AG04449 (cell line): ENCODE measurements at regions of chr10 and their contacts with region 1.

Region 1: GRCh38 chr10:52308251-52309031 is 5.6 kb upstream of the DKK1 start:
- DNase-seq: no peak
- H3K4me3 ChIP-seq: peak overlapping the region; percentile 49
- CTCF ChIP-seq: peak; percentile 60

Region 2: DNA sequence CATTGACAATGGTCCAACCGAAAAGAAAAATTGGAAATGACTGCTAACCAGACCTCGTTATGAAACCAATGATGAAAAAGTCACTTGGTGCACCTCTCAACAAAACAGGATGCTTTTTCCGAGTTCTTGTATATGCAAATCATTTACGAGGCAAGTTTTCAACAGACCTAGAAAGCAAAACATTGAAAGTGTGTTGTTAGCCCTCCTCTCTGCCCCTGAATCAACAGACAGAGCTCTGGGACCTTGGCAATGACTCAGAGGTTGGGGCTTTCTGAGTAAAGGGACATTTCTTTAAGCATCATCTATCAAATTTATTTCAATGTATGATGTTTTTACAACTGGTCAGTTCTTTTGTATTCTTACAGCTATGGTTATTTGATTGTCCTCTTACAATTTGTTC is 10.7 kb before region 1 on chr10:
- CTCF ChIA-PET with region 1: interaction called, 13 read pairs
- POLR2A ChIA-PET with region 1: no interaction called
- DNase-seq: no peak
- H3K4me3 ChIP-seq: no peak overlapping the region
- CTCF ChIP-seq: no peak

Region 3: DNA sequence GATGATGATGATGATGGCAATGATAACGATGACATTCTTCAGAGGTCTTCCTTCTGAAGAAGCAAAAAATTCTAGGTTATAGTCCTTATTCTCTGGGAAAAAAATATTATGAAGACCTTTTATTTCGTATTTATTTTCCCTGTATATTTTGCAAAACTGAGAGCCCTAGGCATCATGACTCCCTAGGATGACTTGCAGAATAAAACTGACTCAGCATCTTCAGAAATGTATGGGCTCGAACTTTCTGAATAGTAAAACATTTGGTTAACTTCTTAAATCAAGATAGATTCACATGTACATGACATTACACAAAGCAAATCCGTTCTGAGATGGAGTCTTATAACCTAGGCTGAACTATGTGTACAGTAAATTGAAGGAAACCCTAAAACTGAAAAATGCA is 35.0 kb after region 1 on chr10:
- CTCF ChIA-PET with region 1: no interaction called
- POLR2A ChIA-PET with region 1: no interaction called
- DNase-seq: no peak
- H3K4me3 ChIP-seq: no peak overlapping the region
- CTCF ChIP-seq: no peak

Region 4: DNA sequence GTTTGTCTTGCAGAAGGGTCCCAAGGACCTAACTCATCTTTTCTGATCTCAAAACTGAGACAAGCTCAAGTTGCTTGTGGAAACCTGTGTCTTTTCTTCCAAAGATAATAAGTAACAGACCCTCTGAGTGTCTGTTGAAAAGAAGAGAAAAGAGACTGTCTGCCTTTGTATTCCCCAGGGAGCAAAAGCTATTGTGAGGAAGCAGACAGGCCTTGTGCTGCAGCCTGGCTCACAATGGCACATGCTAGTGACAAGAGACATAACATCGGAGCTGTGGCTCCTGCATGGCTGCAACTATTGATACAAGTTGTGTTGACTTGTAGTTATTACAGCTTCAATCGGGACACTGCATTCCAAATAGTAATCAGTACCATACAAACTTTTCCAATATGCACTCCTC is 208.6 kb after region 1 on chr10:
- CTCF ChIA-PET with region 1: interaction called, 12 read pairs
- POLR2A ChIA-PET with region 1: no interaction called
- DNase-seq: no peak
- H3K4me3 ChIP-seq: no peak overlapping the region
- CTCF ChIP-seq: no peak

Region 5: DNA sequence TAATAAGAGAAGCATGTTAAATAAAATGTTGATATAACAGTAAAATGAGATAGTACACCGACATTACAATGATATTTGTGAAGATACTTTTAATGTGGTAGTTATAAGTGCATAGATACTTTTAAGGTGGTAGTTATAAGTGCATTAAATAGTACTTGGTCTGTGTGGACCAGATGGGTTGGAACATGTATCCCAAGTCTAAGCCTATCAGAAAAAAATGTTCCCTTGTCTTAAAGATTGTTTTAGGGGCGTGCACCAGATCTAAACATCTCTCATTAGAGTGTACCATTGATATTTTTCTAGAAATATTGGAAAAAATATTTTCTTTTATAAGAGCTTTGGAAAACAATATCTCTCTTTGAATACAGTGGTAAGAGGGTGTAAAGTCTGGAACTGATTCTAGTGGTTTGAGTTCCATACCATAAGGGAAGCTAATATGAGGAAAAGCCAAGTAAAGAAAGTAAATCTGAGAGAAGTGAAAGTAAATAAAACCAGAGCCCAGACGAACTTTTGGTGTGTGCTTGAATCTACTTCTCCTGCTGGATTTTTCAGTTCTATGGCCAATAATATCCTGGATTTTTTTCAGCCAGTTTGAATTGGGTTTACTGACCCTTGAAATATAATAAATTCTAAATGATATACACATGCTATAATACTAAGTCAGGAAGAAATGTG is 288.9 kb after region 1 on chr10:
- CTCF ChIA-PET with region 1: interaction called, 22 read pairs
- POLR2A ChIA-PET with region 1: no interaction called
- DNase-seq: no peak
- H3K4me3 ChIP-seq: peak overlapping the region; percentile 38
- CTCF ChIP-seq: no peak

Region 6: GRCh38 chr10:52653263-52653909 is 344.9 kb after region 1 on chr10:
- CTCF ChIA-PET with region 1: interaction called, 11 read pairs
- POLR2A ChIA-PET with region 1: no interaction called
- DNase-seq: no peak
- H3K4me3 ChIP-seq: no peak overlapping the region
- CTCF ChIP-seq: no peak

Region 7: GRCh38 chr10:52740913-52741675 is 432.7 kb after region 1 on chr10:
- CTCF ChIA-PET with region 1: interaction called, 18 read pairs
- POLR2A ChIA-PET with region 1: no interaction called
- DNase-seq: no peak
- H3K4me3 ChIP-seq: no peak overlapping the region
- CTCF ChIP-seq: peak; percentile 77

Region 8: DNA sequence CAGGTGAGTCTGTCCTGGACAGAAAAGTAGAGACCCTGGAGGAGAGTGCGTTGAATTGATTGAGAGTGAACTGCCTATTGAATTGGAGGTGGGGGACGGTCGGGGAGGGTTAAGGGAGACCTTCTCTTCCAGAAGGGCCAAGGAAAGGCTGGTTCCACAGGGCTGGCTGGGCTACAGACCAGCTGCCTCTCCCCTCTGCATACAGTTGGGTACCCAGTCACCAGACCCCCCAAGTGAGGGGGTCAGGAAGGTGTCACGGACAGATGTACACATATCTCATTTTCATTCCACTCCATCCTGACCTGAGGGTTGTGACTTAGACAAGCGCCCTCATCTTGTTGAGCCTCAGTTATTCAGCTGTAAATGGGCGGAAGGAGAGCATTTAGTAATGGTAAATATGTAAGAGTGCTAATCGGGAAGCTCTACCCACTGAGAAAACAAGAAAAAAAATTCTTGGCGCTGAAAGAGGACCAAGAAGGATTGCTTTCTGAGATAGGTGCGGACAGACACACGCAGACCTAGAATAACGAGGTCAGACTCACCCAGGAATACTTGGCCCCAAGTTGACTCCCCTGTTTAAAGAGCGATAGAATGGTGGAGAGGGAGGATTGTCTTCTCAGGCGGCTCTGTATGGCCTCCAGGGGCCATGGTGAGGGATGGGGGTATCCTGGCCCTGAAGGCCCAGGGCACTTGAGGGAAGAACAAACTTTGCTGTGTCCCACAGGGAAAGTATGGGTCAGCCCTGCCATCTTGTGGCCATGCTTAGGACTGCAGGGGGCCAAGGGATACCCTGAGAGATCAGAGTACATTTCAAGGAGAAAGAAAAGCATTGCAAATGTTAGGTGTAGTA is 471.3 kb after region 1 on chr10:
- CTCF ChIA-PET with region 1: interaction called, 10 read pairs
- POLR2A ChIA-PET with region 1: no interaction called
- DNase-seq: no peak
- H3K4me3 ChIP-seq: no peak overlapping the region
- CTCF ChIP-seq: peak; percentile 90